ENCODE measurements at regions of chr4 and their contacts with region 1.

Region 1: GRCh38 chr4:6327041-6327917 is 57.6 kb downstream of the WFS1 start:
- DNase-seq: peak; percentile 93
- H3K4me3 ChIP-seq: no peak overlapping the region
- H3K27ac ChIP-seq: no peak overlapping the region
- H3K4me1 ChIP-seq: peaks cover 0 to 12% (median 7%) of the 10 kb centered on the region in 4 donors
- H3K27me3 ChIP-seq: peaks cover 0 to 32% (median 0%) of the 10 kb centered on the region in 4 donors
- CTCF ChIP-seq: peak; percentile 95 to 98 (median 97)
- EP300 ChIP-seq: no peak
- POLR2A ChIP-seq: no peak

Region 2: GRCh38 chr4:5998333-5998936 is 328.8 kb before region 1 on chr4:
- intact Hi-C with region 1: loop called (anchors 10 kb)
- DNase-seq: no peak
- H3K4me3 ChIP-seq: no peak overlapping the region
- H3K27ac ChIP-seq: no peak overlapping the region
- H3K4me1 ChIP-seq: peaks cover 0 to 3% (median 0%) of the 10 kb centered on the region in 4 donors
- H3K27me3 ChIP-seq: peaks cover 0 to 49% (median 0%) of the 10 kb centered on the region in 4 donors
- CTCF ChIP-seq: peak; percentile 70 to 90 (median 83)
- EP300 ChIP-seq: no peak
- POLR2A ChIP-seq: no peak

Region 3: GRCh38 chr4:6250235-6250983 is 76.9 kb before region 1 on chr4:
- intact Hi-C with region 1: loop called (anchors 1 kb)
- DNase-seq: no peak
- H3K4me3 ChIP-seq: no peak overlapping the region
- H3K27ac ChIP-seq: no peak overlapping the region
- H3K4me1 ChIP-seq: peaks cover 4 to 9% (median 5%) of the 10 kb centered on the region in 4 donors
- H3K27me3 ChIP-seq: peaks cover 0 to 46% (median 7%) of the 10 kb centered on the region in 4 donors
- CTCF ChIP-seq: peak; percentile 82 to 85 (median 84)
- EP300 ChIP-seq: no peak
- POLR2A ChIP-seq: no peak

Region 4: GRCh38 chr4:6264225-6264540 is 63.1 kb before region 1 on chr4:
- intact Hi-C with region 1: loop called (anchors 1 kb)
- DNase-seq: no peak
- H3K4me3 ChIP-seq: no peak overlapping the region
- H3K27ac ChIP-seq: no peak overlapping the region
- H3K4me1 ChIP-seq: peaks cover 3 to 6% (median 5%) of the 10 kb centered on the region in 4 donors
- H3K27me3 ChIP-seq: peaks cover 0 to 5% (median 0%) of the 10 kb centered on the region in 4 donors
- CTCF ChIP-seq: peak; percentile 50 to 61 (median 59)
- EP300 ChIP-seq: no peak
- POLR2A ChIP-seq: no peak

Region 5: GRCh38 chr4:6516762-6517570 is 189.7 kb after region 1 on chr4:
- intact Hi-C with region 1: no loop called
- DNase-seq: no peak
- H3K4me3 ChIP-seq: no peak overlapping the region
- H3K27ac ChIP-seq: no peak overlapping the region
- H3K4me1 ChIP-seq: no peaks in the 10 kb centered on the region
- H3K27me3 ChIP-seq: peaks cover 0 to 43% (median 0%) of the 10 kb centered on the region in 4 donors
- CTCF ChIP-seq: no peak
- EP300 ChIP-seq: no peak
- POLR2A ChIP-seq: no peak

Region 6: GRCh38 chr4:6546681-6547447 is 219.6 kb after region 1 on chr4:
- intact Hi-C with region 1: loop called (anchors 10 kb)
- DNase-seq: no peak
- H3K4me3 ChIP-seq: no peak overlapping the region
- H3K27ac ChIP-seq: no peak overlapping the region
- H3K4me1 ChIP-seq: no peaks in the 10 kb centered on the region
- H3K27me3 ChIP-seq: peaks cover 0 to 88% (median 0%) of the 10 kb centered on the region in 4 donors
- CTCF ChIP-seq: peak; percentile 65 to 84 (median 69)
- EP300 ChIP-seq: no peak
- POLR2A ChIP-seq: no peak

Region 7: DNA sequence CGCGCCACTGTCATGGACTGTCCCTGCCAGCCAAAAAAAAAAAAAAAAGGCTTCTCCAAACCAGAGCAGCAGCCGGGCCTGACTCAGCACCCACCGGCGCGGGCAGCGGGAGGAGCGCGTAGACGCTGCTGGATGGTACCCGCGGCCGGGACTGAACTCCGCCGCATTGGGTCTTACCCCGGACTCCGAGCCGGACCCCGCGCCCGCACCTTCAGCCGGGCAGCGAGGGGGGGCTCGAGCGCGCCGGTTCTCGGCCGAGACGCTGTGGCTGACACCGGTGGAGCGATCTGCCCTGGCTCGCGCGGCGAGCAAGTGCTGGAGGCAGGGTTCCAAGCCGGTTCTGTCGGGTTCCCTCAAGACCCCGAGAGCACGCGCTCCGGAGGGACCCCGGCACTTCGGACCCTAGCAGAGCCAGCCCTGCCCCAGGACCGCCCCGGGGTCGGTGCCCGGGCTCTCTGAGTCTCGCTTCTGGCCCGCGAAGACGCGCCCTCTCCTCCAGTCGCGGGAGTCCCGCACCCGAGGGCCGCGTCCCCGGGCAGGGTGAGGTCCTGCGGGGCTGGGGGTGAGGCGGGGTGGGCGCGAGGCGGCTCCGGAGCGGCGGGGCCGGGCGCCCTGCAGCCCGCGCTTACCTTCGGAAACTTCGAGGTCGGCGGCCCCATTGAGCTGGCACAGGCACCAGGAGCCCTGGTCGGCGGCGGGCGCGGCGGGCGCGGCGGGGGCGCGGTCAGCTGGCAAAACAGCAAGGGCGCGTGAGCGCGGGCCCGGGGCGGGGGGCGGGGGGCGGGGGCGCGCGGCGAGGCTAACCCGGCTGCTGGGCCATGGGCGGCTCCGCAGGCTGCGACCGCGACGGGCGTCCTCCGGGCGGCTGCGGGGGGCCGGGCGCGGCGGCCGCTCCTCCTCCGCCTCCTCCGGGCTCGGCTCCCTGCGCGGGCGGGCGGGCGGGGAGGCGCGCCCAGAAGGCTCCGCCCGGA is 235.9 kb after region 1 on chr4:
- intact Hi-C with region 1: no loop called
- DNase-seq: no peak
- H3K4me3 ChIP-seq: peak overlapping the region; percentile 44 to 58 (median 47)
- H3K27ac ChIP-seq: no peak overlapping the region
- H3K4me1 ChIP-seq: peaks cover 11 to 19% (median 18%) of the 10 kb centered on the region in 4 donors
- H3K27me3 ChIP-seq: peaks cover 7 to 88% (median 29%) of the 10 kb centered on the region in 4 donors
- CTCF ChIP-seq: no peak
- EP300 ChIP-seq: no peak
- POLR2A ChIP-seq: no peak

Measured in esophagus muscularis mucosa (tissue), 4 donors.